ENCODE measurements at regions of chr1 and their contacts with region 1.

Region 1: DNA sequence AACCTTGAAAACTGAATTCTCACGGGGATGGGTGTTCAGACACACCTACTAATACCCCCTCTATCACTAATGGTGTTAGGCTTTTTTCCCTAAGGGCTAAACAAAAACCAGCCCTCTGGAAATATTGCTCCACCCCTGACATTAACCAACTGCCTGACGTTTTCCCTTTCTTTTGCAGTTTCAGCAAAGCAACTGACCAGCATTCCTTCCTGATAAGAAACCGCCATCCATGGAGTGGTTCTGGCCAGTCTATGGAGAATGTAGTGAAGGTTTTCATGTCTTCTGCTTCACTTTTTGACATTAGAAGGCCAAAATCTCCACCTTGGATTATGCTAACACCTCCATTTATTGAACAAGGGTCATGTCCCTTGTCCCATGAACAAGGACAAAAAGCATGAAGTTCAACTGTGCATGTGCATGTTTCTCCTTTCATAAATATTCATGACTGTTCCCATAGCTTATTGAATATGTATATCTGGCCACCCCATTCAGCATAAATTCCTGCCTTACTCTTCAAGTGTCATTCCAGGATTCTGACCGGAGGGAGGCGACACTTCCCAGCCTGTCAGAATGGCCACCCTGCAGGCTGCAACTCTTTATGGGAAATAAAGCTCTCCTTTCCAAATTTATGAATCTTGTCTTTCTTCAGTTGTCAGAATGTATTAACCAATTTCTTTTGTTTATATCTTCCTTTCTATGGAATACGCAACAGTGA is 314.3 kb downstream of the HHIPL2 start:
- DNase-seq: no peak
- H3K4me3 ChIP-seq: no peak overlapping the region
- H3K27ac ChIP-seq: no peak overlapping the region
- H3K4me1 ChIP-seq: no peaks in the 10 kb centered on the region
- H3K27me3 ChIP-seq: no peaks in the 10 kb centered on the region
- CTCF ChIP-seq: no peak
- EP300 ChIP-seq: no peak
- POLR2A ChIP-seq: no peak

Region 2: GRCh38 chr1:220487297-220487820 is 1746.2 kb before region 1 on chr1:
- in situ Hi-C with region 1: no loop called
- intact Hi-C with region 1: loop called (anchors 5 kb)
- DNase-seq: peak; percentile 70
- H3K4me3 ChIP-seq: no peak overlapping the region
- H3K27ac ChIP-seq: peak overlapping the region; percentile 44 to 81 (median 69)
- H3K4me1 ChIP-seq: peaks cover 0 to 10% (median 5%) of the 10 kb centered on the region in 4 donors
- H3K27me3 ChIP-seq: no peaks in the 10 kb centered on the region
- CTCF ChIP-seq: no peak
- EP300 ChIP-seq: no peak
- POLR2A ChIP-seq: no peak

Region 3: DNA sequence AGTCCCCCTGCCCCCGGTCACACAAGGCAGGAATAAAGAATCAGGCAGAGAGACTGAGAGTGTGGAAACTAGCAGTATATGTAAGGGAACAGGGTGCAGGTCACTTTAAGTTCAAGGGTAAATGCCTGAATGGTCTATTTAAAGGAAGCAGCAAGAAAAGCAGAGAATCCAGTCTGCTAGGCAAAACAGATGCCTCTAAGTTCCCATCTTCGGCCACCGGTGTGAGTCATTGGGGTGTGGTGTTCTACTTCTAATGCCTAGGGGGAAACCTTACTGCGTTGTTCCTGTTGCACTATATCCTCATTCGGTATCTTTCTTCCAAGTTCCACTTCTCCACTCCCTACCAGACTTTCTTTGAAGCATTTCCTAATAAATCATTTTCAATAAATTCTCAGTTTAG is 54.4 kb after region 1 on chr1:
- in situ Hi-C with region 1: no loop called
- intact Hi-C with region 1: no loop called
- DNase-seq: no peak
- H3K4me3 ChIP-seq: no peak overlapping the region
- H3K27ac ChIP-seq: no peak overlapping the region
- H3K4me1 ChIP-seq: peaks cover 0 to 7% (median 0%) of the 10 kb centered on the region in 4 donors
- H3K27me3 ChIP-seq: no peaks in the 10 kb centered on the region
- CTCF ChIP-seq: no peak
- EP300 ChIP-seq: no peak
- POLR2A ChIP-seq: no peak

Measured in transverse colon (tissue), 4 donors.